ENCODE measurements at regions of chr12 and their contacts with region 1.

Region 1: GRCh38 chr12:45587877-45588533 is 141.5 kb upstream of the ARID2 start:
- DNase-seq: no peak
- H3K4me3 ChIP-seq: no peak overlapping the region
- H3K4me3 Mint-ChIP-seq: no peak overlapping the region
- H3K27ac Mint-ChIP-seq: no peak overlapping the region
- H3K4me1 ChIP-seq: peaks cover 15% of the 10 kb centered on the region
- H3K4me1 Mint-ChIP-seq: peaks cover 22% of the 10 kb centered on the region
- H3K27me3 ChIP-seq: no peaks in the 10 kb centered on the region
- H3K27me3 Mint-ChIP-seq: no peaks in the 10 kb centered on the region
- CTCF ChIP-seq: no peak

Region 2: DNA sequence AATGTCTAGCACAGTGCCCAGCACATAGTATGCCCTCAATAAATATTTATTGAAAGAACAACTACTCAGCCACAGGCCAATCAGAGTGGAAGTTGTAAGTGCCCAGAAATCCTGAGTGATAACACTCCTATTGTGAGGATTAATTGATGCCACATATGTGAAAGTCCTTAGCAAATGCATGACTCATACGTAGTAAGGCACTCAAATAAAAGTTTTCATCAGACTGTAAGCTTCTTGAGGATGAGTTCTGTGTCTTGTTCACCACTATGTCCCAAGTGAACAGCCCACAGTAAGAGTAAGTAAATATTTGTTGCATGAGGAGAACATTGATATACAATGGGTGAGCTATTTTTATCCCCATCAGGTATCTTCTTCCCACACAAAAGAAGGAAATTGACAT is 396.8 kb before region 1 on chr12:
- CTCF ChIA-PET with region 1: no interaction called
- POLR2A ChIA-PET with region 1: no interaction called
- intact Hi-C with region 1: loop called (anchors 1 kb)
- DNase-seq: no peak
- H3K4me3 ChIP-seq: no peak overlapping the region
- H3K4me3 Mint-ChIP-seq: no peak overlapping the region
- H3K27ac Mint-ChIP-seq: peak overlapping the region; percentile 95
- H3K4me1 ChIP-seq: peaks cover 57% of the 10 kb centered on the region
- H3K4me1 Mint-ChIP-seq: peaks cover 44% of the 10 kb centered on the region
- H3K27me3 ChIP-seq: no peaks in the 10 kb centered on the region
- H3K27me3 Mint-ChIP-seq: no peaks in the 10 kb centered on the region
- CTCF ChIP-seq: no peak

Region 3: DNA sequence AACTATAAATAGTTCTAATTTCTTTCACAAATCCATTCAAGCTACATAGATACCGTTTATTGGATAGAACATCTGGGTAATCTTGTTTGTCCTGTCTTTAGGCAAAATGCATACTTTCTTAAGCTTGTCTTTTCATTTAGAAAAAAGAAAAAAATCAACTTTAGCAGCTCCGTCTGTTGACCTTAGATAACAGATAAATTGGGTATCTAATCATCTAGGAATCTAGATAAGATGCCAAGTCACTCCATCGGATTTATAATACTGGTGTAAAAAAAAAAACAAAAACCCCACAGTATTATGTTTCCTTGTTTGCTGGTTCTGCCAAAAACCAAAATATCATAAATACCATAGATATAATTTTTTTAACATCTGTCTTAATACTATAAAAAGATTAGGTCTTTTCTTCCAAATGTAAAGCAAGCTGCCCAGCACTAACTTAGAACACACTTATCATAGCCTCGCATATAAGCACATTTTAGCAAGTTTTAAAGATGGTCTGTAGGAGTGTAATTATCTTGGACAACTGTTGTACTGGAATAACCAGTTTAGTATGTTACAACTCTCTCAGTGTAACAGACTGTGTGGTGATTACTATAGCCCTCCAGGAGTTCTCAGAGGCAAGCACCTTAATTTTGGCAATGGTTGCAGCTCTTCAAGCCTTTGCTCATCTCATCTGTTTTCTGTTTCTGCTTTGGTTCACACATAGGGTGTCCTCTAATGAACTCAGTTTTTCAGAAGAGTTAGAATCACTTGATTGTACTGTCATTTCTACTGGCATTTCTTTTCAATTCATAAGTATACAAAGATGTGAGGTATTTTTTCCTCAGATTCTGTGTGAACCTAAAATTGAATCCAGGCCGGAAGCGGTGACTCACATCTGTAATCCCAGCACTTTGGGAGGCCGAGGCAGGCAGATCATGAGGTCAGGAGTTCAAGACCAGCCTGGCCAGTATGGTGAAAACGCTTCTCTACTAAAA is 289.0 kb before region 1 on chr12:
- CTCF ChIA-PET with region 1: no interaction called
- POLR2A ChIA-PET with region 1: no interaction called
- intact Hi-C with region 1: loop called (anchors 10 kb)
- DNase-seq: peak in 1 of 2 experiments; percentile 45
- H3K4me3 ChIP-seq: no peak overlapping the region
- H3K4me3 Mint-ChIP-seq: no peak overlapping the region
- H3K27ac Mint-ChIP-seq: peak overlapping the region; percentile 72
- H3K4me1 ChIP-seq: peaks cover 71% of the 10 kb centered on the region
- H3K4me1 Mint-ChIP-seq: peaks cover 30% of the 10 kb centered on the region
- H3K27me3 ChIP-seq: no peaks in the 10 kb centered on the region
- H3K27me3 Mint-ChIP-seq: no peaks in the 10 kb centered on the region
- CTCF ChIP-seq: no peak

Region 4: GRCh38 chr12:45518291-45519235 is 69.4 kb before region 1 on chr12:
- CTCF ChIA-PET with region 1: no interaction called
- POLR2A ChIA-PET with region 1: no interaction called
- intact Hi-C with region 1: no loop called
- DNase-seq: no peak
- H3K4me3 ChIP-seq: no peak overlapping the region
- H3K4me3 Mint-ChIP-seq: no peak overlapping the region
- H3K27ac Mint-ChIP-seq: no peak overlapping the region
- H3K4me1 ChIP-seq: no peaks in the 10 kb centered on the region
- H3K4me1 Mint-ChIP-seq: no peaks in the 10 kb centered on the region
- H3K27me3 ChIP-seq: no peaks in the 10 kb centered on the region
- H3K27me3 Mint-ChIP-seq: no peaks in the 10 kb centered on the region
- CTCF ChIP-seq: no peak

Region 5: GRCh38 chr12:45557016-45557415 is 31.0 kb before region 1 on chr12:
- CTCF ChIA-PET with region 1: no interaction called
- POLR2A ChIA-PET with region 1: no interaction called
- intact Hi-C with region 1: no loop called
- DNase-seq: no peak
- H3K4me3 ChIP-seq: no peak overlapping the region
- H3K4me3 Mint-ChIP-seq: no peak overlapping the region
- H3K27ac Mint-ChIP-seq: no peak overlapping the region
- H3K4me1 ChIP-seq: peaks cover under 1% of the 10 kb centered on the region; the same call in 1 of the 2 replicates
- H3K4me1 Mint-ChIP-seq: no peaks in the 10 kb centered on the region
- H3K27me3 ChIP-seq: no peaks in the 10 kb centered on the region
- H3K27me3 Mint-ChIP-seq: no peaks in the 10 kb centered on the region
- CTCF ChIP-seq: no peak

Region 6: DNA sequence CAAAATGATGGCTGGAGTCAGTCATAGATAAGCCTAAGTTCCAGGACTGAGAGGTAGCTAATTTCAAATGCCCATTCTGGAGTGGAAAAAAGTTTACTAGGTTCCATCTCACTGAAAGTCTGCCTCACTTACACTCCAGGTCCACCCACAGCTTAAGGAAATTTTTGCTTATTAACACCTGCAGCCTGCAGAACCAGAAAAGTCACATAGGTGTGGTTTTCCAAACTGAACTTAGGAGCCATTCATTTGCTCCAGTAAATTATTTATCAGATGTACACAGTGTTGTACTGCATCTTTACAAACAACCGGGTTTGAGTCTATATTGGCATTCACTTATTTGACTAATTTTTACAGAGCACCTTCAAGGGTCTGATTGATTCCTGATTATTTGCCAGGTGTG is 15.9 kb before region 1 on chr12:
- CTCF ChIA-PET with region 1: interaction called, 5 read pairs
- POLR2A ChIA-PET with region 1: no interaction called
- intact Hi-C with region 1: loop called (anchors 1 kb)
- DNase-seq: no peak
- H3K4me3 ChIP-seq: no peak overlapping the region
- H3K4me3 Mint-ChIP-seq: no peak overlapping the region
- H3K27ac Mint-ChIP-seq: no peak overlapping the region
- H3K4me1 ChIP-seq: peaks cover 24% of the 10 kb centered on the region; the same call in 1 of the 2 replicates
- H3K4me1 Mint-ChIP-seq: peaks cover 7% of the 10 kb centered on the region
- H3K27me3 ChIP-seq: no peaks in the 10 kb centered on the region
- H3K27me3 Mint-ChIP-seq: no peaks in the 10 kb centered on the region
- CTCF ChIP-seq: no peak

Region 7: GRCh38 chr12:45598761-45599160 is 10.8 kb after region 1 on chr12:
- CTCF ChIA-PET with region 1: interaction called, 6 read pairs
- POLR2A ChIA-PET with region 1: no interaction called
- intact Hi-C with region 1: loop called (anchors 1 kb)
- DNase-seq: no peak
- H3K4me3 ChIP-seq: no peak overlapping the region
- H3K4me3 Mint-ChIP-seq: no peak overlapping the region
- H3K27ac Mint-ChIP-seq: no peak overlapping the region
- H3K4me1 ChIP-seq: peaks cover 12% of the 10 kb centered on the region
- H3K4me1 Mint-ChIP-seq: peaks cover 27% of the 10 kb centered on the region
- H3K27me3 ChIP-seq: no peaks in the 10 kb centered on the region
- H3K27me3 Mint-ChIP-seq: no peaks in the 10 kb centered on the region
- CTCF ChIP-seq: no peak

Region 8: GRCh38 chr12:45655201-45655600 is 67.2 kb after region 1 on chr12:
- CTCF ChIA-PET with region 1: no interaction called
- POLR2A ChIA-PET with region 1: no interaction called
- intact Hi-C with region 1: loop called (anchors 5 kb)
- DNase-seq: peak; percentile 64 to 74
- H3K4me3 ChIP-seq: no peak overlapping the region
- H3K4me3 Mint-ChIP-seq: no peak overlapping the region
- H3K27ac Mint-ChIP-seq: no peak overlapping the region
- H3K4me1 ChIP-seq: no peaks in the 10 kb centered on the region
- H3K4me1 Mint-ChIP-seq: no peaks in the 10 kb centered on the region
- H3K27me3 ChIP-seq: no peaks in the 10 kb centered on the region
- H3K27me3 Mint-ChIP-seq: no peaks in the 10 kb centered on the region
- CTCF ChIP-seq: peak; percentile 28 to 71

Region 9: DNA sequence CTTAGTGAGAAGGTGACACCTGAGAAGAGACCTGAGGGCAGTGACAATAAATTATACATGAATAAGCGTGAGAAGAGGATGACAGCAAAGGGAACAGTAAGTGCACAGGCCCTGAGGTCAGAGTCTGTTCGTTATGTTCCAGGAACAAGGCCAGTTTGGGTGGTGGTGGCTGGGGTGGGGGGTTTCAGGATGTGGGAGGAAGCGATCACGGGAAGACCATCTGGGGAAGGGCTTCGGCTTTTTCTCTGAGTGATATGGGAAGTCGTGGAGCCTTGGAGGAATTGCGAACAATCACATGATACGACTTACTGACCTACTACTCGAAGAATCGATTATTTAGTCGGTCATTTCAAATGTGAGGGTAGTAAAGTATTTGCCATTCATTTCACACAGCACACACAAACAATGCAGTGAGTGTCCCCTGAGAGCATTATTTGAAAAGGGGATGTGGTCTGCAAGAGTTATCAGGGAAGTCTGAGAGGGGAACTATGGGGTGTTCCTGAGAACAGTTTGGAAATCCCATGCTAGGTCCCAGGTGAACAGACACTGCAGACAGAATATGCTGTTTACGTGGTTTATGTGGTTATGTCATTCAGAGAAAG is 586.2 kb after region 1 on chr12:
- CTCF ChIA-PET with region 1: no interaction called
- POLR2A ChIA-PET with region 1: no interaction called
- intact Hi-C with region 1: no loop called
- DNase-seq: no peak
- H3K4me3 ChIP-seq: no peak overlapping the region
- H3K4me3 Mint-ChIP-seq: no peak overlapping the region
- H3K27ac Mint-ChIP-seq: no peak overlapping the region
- H3K4me1 ChIP-seq: no peaks in the 10 kb centered on the region
- H3K4me1 Mint-ChIP-seq: no peaks in the 10 kb centered on the region
- H3K27me3 ChIP-seq: no peaks in the 10 kb centered on the region; the same call in 1 of the 2 replicates
- H3K27me3 Mint-ChIP-seq: peaks cover 9% of the 10 kb centered on the region
- CTCF ChIP-seq: no peak